ENCODE measurements at regions of chr2 and their contacts with region 1.

Region 1: DNA sequence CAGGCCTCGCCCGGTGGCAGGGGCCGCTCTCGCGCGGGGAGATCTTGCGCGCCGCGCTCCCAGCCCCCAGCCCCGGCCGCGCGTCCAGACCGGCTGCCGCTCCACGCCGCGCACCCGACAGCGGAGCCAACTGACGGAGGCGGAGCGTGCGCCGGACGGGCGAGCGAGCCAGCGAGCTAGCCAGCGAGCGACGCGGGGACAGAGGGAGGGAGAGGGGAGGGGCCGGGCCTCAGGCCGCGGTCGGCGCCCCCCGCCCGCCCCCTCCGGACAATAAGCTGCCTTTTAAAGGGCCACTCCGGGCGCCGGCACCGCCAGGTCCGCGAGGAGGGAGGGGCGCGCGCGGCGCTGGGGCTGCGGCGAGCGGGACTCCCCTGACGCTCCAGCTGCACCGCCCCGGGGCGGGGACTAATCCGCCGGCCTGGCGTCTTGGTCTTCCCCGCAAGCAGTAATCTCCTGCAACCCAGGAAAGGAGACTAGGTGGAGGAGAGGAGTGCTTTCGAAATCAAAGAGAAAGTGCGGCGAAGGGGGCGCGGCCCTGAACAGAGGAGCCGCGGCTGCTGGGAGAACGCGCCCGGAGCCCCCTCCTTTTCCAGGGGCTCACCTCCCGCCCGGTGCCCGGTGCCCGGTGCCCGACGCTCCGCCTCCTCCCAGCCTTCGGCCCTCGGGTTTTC is at the start of gene BIN1:
- DNase-seq: peak; percentile 85 to 99 (median 92)

Region 2: GRCh38 chr2:127000937-127001336 is 106.1 kb before region 1 on chr2:
- intact Hi-C with region 1: no loop called
- DNase-seq: no peak

Region 3: GRCh38 chr2:127072970-127073369 is 34.1 kb before region 1 on chr2:
- intact Hi-C with region 1: loop called (anchors 5 kb)
- DNase-seq: peak; percentile 81 to 99 (median 90)

Region 4: GRCh38 chr2:127415593-127416505 is 308.8 kb after region 1 on chr2:
- intact Hi-C with region 1: no loop called
- DNase-seq: peak in 6 of 10 donors; percentile 37 to 93 (median 44)